Stomach (tissue), 19 donors: ENCODE measurements at regions of chr4 and their contacts with region 1.

Region 1: DNA sequence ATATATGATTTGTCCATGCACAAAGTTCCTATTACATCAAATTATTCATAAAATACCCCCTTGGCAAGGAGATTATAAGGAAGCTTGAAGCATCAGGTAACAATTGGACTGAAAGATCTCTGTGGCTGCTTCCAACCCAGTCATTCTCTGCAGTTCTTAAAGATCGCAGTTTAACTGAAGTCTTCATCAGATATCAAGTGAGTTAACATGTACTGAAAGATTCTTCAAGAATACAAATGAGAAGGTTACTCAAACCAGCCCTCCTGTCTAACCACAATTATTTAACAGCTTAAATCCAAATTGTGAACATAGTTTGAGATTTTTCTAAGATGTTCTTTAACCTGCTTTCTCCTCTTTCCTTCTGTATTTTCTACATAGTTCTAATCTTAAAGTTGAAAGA is 56.1 kb downstream of the SLC10A7 start:
- DNase-seq: no peak
- H3K4me3 ChIP-seq: no peak overlapping the region
- H3K27ac ChIP-seq: no peak overlapping the region
- H3K4me1 ChIP-seq: no peaks in the 10 kb centered on the region
- H3K27me3 ChIP-seq: no peaks in the 10 kb centered on the region
- CTCF ChIP-seq: no peak
- EP300 ChIP-seq: no peak
- POLR2A ChIP-seq: no peak

Region 2: GRCh38 chr4:146742416-146742815 is 276.8 kb after region 1 on chr4:
- intact Hi-C with region 1: no loop called
- DNase-seq: peak in 1 of 2 donors; percentile 4
- H3K4me3 ChIP-seq: no peak overlapping the region
- H3K27ac ChIP-seq: no peak overlapping the region
- H3K4me1 ChIP-seq: no peaks in the 10 kb centered on the region
- H3K27me3 ChIP-seq: no peaks in the 10 kb centered on the region
- CTCF ChIP-seq: no peak
- EP300 ChIP-seq: no peak
- POLR2A ChIP-seq: no peak

Region 3: GRCh38 chr4:147969573-147970385 is 1504.2 kb after region 1 on chr4:
- intact Hi-C with region 1: loop called (anchors 10 kb)
- DNase-seq: no peak
- H3K4me3 ChIP-seq: no peak overlapping the region
- H3K27ac ChIP-seq: no peak overlapping the region
- H3K4me1 ChIP-seq: peaks cover under 1 to 32% (median 16%) of the 10 kb centered on the region in 4 donors
- H3K27me3 ChIP-seq: no peaks in the 10 kb centered on the region
- CTCF ChIP-seq: no peak
- EP300 ChIP-seq: no peak
- POLR2A ChIP-seq: no peak